ENCODE measurements at regions of chr5 and their contacts with region 1.

Region 1: DNA sequence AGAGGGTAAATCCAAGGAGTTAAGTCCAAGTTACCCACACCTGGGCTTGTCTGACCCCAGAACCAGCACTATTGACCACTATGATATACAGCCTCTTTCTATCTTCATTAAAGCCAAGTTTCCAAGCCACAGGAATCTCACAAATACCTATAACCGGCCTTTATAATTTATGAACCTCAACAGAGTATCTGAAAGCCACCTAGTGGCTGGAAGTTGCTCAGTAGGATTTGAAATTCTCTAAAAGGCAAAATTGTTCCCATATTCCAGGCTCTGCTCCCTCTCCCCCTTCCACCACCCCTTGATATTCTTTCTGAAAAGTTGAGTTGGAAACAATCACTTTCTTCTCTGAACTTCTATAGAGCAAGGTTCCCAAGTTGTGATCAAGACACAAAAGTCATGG is 106.4 kb upstream of the GPR151 start:
- DNase-seq: no peak
- H3K4me3 ChIP-seq: no peak overlapping the region
- H3K27ac ChIP-seq: no peak overlapping the region
- H3K4me1 ChIP-seq: peaks cover 3 to 13% (median 6%) of the 10 kb centered on the region in 4 experiments; a peak in 6 of 7 replicates
- H3K27me3 ChIP-seq: no peaks in the 10 kb centered on the region
- CTCF ChIP-seq: peak in 2 of 3 experiments; percentile 30 to 41; a peak in 2 of 4 replicates
- EP300 ChIP-seq: no peak
- POLR2A ChIP-seq: no peak
- RAD21 ChIP-seq: peak; percentile 17 to 26; a peak in 1 of 4 replicates

Region 2: GRCh38 chr5:146510559-146511125 is 111.7 kb before region 1 on chr5:
- CTCF ChIA-PET with region 1: no interaction called
- POLR2A ChIA-PET with region 1: no interaction called
- DNase-seq: no peak
- H3K4me3 ChIP-seq: no peak overlapping the region
- H3K27ac ChIP-seq: no peak overlapping the region
- H3K4me1 ChIP-seq: no peaks in the 10 kb centered on the region
- H3K27me3 ChIP-seq: no peaks in the 10 kb centered on the region
- CTCF ChIP-seq: no peak
- EP300 ChIP-seq: no peak
- POLR2A ChIP-seq: no peak
- RAD21 ChIP-seq: no peak

Region 3: DNA sequence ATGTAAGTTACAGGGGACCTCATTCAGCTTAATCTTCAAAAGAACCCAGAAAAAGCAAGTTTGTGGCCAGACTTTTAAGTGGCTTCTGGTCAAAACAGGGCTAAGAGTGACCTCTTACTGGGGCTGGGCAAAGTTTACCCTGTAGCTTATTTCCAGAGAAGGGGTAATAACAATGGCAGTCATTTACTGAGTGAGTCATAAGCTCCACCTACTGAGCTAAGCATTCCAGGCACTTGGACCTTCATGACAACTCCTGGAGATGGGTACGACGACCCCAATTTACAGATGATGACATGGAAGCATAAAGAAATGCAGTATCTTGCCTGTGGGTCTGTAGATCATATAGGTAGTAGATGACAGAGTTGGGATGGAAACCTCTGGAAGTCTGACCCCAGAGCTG is 101.7 kb before region 1 on chr5:
- CTCF ChIA-PET with region 1: no interaction called
- POLR2A ChIA-PET with region 1: no interaction called
- DNase-seq: no peak
- H3K4me3 ChIP-seq: no peak overlapping the region
- H3K27ac ChIP-seq: no peak overlapping the region
- H3K4me1 ChIP-seq: peaks cover 0 to 4% (median 0%) of the 10 kb centered on the region in 4 experiments; a peak in 1 of 7 replicates
- H3K27me3 ChIP-seq: no peaks in the 10 kb centered on the region
- CTCF ChIP-seq: no peak
- EP300 ChIP-seq: no peak
- POLR2A ChIP-seq: no peak
- RAD21 ChIP-seq: no peak

Region 4: DNA sequence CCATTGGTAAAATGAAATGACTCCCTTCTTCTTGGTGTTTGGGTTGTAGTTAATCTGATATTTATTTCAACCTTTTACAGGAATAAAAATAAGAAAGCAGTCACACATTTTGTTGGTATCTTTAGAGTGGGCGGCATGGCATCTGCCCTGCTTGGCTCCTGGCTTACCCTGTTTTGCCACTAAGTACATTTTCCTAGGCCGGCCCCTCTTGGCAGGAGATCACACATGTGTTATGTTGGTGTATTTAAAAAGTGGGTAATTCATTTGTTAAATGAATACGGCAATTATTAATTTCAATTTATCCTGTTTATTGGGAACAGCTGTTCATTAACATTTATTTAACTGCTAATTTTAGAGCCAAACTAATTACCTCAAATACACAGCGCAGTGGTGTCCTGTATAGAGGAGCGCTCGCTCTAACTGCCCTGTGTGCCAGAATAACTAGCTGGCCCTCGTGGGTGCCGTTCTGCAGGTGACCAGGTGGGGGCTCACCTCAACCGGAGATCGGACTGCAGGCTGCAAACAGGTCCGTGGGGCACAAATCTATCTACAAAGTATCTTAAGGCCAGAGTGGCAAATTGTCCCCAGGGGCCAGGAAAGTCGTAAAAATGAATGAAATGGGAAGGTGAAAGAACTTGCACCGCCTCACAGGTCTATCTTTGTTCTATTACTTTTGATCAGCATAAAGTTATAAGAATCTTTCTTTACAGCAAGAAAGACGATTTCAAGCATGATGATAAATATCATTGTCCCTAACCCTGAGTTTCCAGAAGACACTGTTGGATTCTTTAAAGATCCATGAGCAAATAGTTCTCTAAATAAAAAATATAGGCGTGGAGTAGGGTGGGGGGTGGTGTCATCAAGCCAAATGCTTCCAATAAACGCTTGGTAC is 80.2 kb before region 1 on chr5:
- CTCF ChIA-PET with region 1: interaction called, 12 read pairs
- POLR2A ChIA-PET with region 1: no interaction called
- DNase-seq: peak; percentile 61 to 93
- H3K4me3 ChIP-seq: no peak overlapping the region
- H3K27ac ChIP-seq: no peak overlapping the region
- H3K4me1 ChIP-seq: peaks cover 0 to 3% (median 0%) of the 10 kb centered on the region in 4 experiments; a peak in 1 of 7 replicates
- H3K27me3 ChIP-seq: no peaks in the 10 kb centered on the region
- CTCF ChIP-seq: peak; percentile 89 to 100 (median 94)
- EP300 ChIP-seq: no peak
- POLR2A ChIP-seq: no peak
- RAD21 ChIP-seq: peak; percentile 99

Region 5: GRCh38 chr5:146595088-146595487 is 27.3 kb before region 1 on chr5:
- CTCF ChIA-PET with region 1: interaction called, 16 read pairs
- POLR2A ChIA-PET with region 1: no interaction called
- DNase-seq: no peak
- H3K4me3 ChIP-seq: no peak overlapping the region
- H3K27ac ChIP-seq: no peak overlapping the region
- H3K4me1 ChIP-seq: no peaks in the 10 kb centered on the region
- H3K27me3 ChIP-seq: no peaks in the 10 kb centered on the region
- CTCF ChIP-seq: peak in 2 of 3 experiments; percentile 32 to 42; a peak in 3 of 4 replicates
- EP300 ChIP-seq: no peak
- POLR2A ChIP-seq: no peak
- RAD21 ChIP-seq: peak; percentile 43 to 65

Region 6: GRCh38 chr5:146633323-146633764 is 11.0 kb after region 1 on chr5:
- CTCF ChIA-PET with region 1: interaction called, 11 read pairs
- POLR2A ChIA-PET with region 1: no interaction called
- DNase-seq: no peak
- H3K4me3 ChIP-seq: no peak overlapping the region
- H3K27ac ChIP-seq: no peak overlapping the region
- H3K4me1 ChIP-seq: no peaks in the 10 kb centered on the region
- H3K27me3 ChIP-seq: no peaks in the 10 kb centered on the region
- CTCF ChIP-seq: no peak
- EP300 ChIP-seq: no peak
- POLR2A ChIP-seq: no peak
- RAD21 ChIP-seq: no peak

Region 7: DNA sequence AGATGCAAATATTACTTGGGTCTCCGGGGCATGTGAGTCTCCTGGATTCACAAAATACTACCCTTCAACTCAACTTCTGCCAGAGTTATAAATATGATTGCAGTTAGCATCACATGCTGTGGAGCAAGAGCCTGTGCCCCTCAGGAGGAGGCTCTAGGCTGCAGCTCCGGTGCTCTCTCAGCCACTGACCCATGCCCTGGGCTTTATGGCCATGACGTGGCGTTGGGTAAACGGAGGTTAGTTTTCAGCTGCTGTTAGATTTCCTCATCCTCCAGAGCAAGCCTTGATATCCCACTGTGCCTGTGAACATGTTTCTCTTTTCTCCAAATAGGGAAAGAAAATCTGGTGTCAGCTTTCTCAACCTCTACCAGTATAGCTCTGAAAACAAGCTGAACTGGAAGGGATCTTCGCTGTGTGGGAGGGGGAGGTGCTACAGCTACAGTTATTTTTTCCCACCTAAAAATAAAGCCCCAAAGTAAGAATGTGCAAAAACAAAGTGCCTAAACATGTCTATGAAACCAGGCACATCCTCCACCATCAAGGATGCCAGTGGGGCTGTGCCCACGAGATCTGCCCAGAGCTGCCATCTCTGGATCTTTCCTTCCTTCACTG is 18.0 kb after region 1 on chr5:
- CTCF ChIA-PET with region 1: interaction called, 13 read pairs
- POLR2A ChIA-PET with region 1: interaction called, 3 read pairs
- DNase-seq: no peak
- H3K4me3 ChIP-seq: no peak overlapping the region
- H3K27ac ChIP-seq: no peak overlapping the region
- H3K4me1 ChIP-seq: peaks cover 0 to 4% (median 1%) of the 10 kb centered on the region in 4 experiments; a peak in 3 of 7 replicates
- H3K27me3 ChIP-seq: no peaks in the 10 kb centered on the region
- CTCF ChIP-seq: no peak
- EP300 ChIP-seq: no peak
- POLR2A ChIP-seq: no peak
- RAD21 ChIP-seq: no peak

Measured in H1 (cell line).